ENCODE measurements at regions of chr12 and their contacts with region 1.

Region 1: GRCh38 chr12:68331869-68332727 is at the start of gene MDM1:
- DNase-seq: peak; percentile 97
- H3K4me3 ChIP-seq: peak within 1 kb of the TSS; percentile 60 to 95 (median 70)
- H3K27ac ChIP-seq: peak within 1 kb of the TSS; percentile 79 to 89 (median 80)
- H3K4me1 ChIP-seq: peaks cover 5 to 29% (median 14%) of the 10 kb centered on the region in 4 donors
- H3K27me3 ChIP-seq: no peaks in the 10 kb centered on the region
- CTCF ChIP-seq: no peak
- EP300 ChIP-seq: no peak
- POLR2A ChIP-seq: peak; percentile 44
- total RNA-seq, gene MDM1: 8.2 to 23.5 (median 13.4) TPM

Region 2: DNA sequence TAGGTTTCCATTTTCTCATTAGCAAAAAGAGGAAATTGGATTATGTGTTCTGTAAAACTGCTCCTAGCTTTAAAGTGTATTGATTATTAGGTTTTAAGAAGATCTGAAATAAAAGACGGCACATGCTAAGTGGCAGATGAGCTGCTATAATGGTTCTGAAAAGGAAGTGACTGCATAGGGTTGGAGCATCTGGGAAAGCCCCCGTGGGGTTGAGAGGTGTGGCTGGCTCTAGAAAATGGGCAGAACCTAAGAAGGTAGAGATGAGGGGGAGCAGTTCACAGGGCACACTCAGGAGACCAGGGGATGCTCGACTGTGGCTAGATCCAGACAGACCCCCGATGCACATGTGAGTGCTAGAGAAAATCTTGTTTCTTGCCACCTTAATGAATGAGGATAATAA is 340.9 kb before region 1 on chr12:
- in situ Hi-C with region 1: no loop called
- intact Hi-C with region 1: no loop called
- DNase-seq: peak; percentile 24
- H3K4me3 ChIP-seq: no peak overlapping the region
- H3K27ac ChIP-seq: no peak overlapping the region
- H3K4me1 ChIP-seq: no peaks in the 10 kb centered on the region
- H3K27me3 ChIP-seq: no peaks in the 10 kb centered on the region
- CTCF ChIP-seq: no peak
- EP300 ChIP-seq: no peak
- POLR2A ChIP-seq: no peak

Region 3: DNA sequence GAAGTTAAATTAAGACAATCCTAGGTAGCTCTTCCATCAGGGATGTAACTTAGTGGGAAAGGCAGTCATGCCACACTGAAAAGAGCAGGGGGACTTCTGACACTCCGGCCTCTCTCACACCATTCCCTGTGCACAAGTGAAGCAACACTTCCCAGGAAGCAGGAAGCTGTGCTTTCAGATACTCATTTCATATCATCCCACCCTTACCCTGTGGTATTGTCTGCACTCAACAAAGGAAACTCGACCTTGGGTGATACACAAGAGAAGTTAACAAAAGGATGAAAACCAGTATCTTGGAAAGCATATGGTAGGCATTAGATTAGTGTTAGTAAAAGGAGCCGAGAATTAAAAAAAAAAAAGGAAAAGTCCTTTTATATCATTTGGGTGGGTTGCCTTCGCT is 61.3 kb after region 1 on chr12:
- in situ Hi-C with region 1: no loop called
- intact Hi-C with region 1: no loop called
- DNase-seq: no peak
- H3K4me3 ChIP-seq: no peak overlapping the region
- H3K27ac ChIP-seq: no peak overlapping the region
- H3K4me1 ChIP-seq: peaks cover 0 to 5% (median 0%) of the 10 kb centered on the region in 4 donors
- H3K27me3 ChIP-seq: no peaks in the 10 kb centered on the region
- CTCF ChIP-seq: no peak
- EP300 ChIP-seq: no peak
- POLR2A ChIP-seq: no peak

Region 4: GRCh38 chr12:68451261-68452077 is 119.4 kb after region 1 on chr12:
- in situ Hi-C with region 1: no loop called
- intact Hi-C with region 1: no loop called
- DNase-seq: peak; percentile 44
- H3K4me3 ChIP-seq: peak overlapping the region in 1 of 4 donors; percentile 9
- H3K27ac ChIP-seq: peak overlapping the region; percentile 60 to 79 (median 66)
- H3K4me1 ChIP-seq: peaks cover 14 to 39% (median 21%) of the 10 kb centered on the region in 4 donors
- H3K27me3 ChIP-seq: no peaks in the 10 kb centered on the region
- CTCF ChIP-seq: no peak
- EP300 ChIP-seq: no peak
- POLR2A ChIP-seq: no peak

Region 5: GRCh38 chr12:68633614-68634529 is 301.8 kb after region 1 on chr12:
- in situ Hi-C with region 1: no loop called
- intact Hi-C with region 1: no loop called
- DNase-seq: no peak
- H3K4me3 ChIP-seq: no peak overlapping the region
- H3K27ac ChIP-seq: no peak overlapping the region
- H3K4me1 ChIP-seq: peaks cover 5 to 86% (median 37%) of the 10 kb centered on the region in 4 donors
- H3K27me3 ChIP-seq: no peaks in the 10 kb centered on the region
- CTCF ChIP-seq: no peak
- EP300 ChIP-seq: no peak
- POLR2A ChIP-seq: no peak

Region 6: DNA sequence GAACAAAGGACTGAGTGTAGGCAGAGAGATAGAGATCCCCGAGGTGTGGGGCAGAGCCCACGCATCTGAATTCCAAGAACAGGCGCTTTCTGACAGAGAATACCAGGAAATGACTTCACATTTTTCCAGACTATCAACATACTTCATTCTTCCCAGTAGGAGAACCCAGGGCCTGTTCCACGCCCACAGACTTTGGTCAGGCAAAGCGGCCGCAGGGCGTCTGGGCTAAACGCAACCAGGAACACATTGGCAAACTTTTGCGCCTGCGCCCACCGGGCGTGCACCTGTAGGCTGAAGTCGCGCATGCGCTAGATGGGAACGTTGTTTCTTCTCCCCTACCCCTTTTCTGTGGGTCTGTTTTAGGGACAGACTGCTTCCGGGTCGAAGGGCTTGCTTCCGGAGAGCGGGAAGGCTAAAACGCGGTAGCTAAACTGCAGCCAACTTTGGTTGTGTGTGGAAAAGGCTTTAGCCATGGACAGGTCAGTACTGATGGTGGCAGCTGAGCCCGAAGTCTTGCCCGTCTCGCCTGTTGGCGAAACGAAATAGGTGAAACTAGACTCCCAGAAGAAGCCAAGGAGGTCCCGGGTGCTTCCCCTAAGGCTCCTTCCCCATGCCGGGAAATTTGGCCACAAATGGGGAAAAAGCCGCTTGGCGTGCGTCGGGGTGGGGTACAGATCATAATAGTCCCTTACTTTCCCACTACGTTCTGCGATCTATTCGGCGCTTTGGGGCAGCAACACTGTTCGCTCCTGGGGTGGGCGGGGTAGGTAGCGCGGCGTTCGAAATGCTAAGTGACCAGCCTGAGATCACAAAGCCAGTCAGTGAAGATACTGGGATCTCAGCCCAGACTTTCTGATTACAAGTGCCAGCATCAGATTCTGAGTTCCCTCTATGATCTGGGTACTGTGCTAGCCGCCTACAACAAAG is 354.8 kb after region 1 on chr12 and contains the start of gene NUP107:
- in situ Hi-C with region 1: loop called in 1 of 4 experiments (anchors 25 kb)
- intact Hi-C with region 1: no loop called
- DNase-seq: peak; percentile 99
- H3K4me3 ChIP-seq: peak within 1 kb of the TSS; percentile 76 to 80 (median 77)
- H3K27ac ChIP-seq: peak within 1 kb of the TSS; percentile 78 to 88 (median 84)
- H3K4me1 ChIP-seq: peaks cover 3 to 24% (median 13%) of the 10 kb centered on the region in 4 donors
- H3K27me3 ChIP-seq: no peaks in the 10 kb centered on the region
- CTCF ChIP-seq: peak in 3 of 5 experiments; percentile 8 to 61 (median 58)
- EP300 ChIP-seq: peak; percentile 68
- POLR2A ChIP-seq: peak; percentile 66
- total RNA-seq, gene NUP107: 6.4 to 29.2 (median 22.6) TPM